ENCODE measurements at regions of chr12 and their contacts with region 1.

Region 1: DNA sequence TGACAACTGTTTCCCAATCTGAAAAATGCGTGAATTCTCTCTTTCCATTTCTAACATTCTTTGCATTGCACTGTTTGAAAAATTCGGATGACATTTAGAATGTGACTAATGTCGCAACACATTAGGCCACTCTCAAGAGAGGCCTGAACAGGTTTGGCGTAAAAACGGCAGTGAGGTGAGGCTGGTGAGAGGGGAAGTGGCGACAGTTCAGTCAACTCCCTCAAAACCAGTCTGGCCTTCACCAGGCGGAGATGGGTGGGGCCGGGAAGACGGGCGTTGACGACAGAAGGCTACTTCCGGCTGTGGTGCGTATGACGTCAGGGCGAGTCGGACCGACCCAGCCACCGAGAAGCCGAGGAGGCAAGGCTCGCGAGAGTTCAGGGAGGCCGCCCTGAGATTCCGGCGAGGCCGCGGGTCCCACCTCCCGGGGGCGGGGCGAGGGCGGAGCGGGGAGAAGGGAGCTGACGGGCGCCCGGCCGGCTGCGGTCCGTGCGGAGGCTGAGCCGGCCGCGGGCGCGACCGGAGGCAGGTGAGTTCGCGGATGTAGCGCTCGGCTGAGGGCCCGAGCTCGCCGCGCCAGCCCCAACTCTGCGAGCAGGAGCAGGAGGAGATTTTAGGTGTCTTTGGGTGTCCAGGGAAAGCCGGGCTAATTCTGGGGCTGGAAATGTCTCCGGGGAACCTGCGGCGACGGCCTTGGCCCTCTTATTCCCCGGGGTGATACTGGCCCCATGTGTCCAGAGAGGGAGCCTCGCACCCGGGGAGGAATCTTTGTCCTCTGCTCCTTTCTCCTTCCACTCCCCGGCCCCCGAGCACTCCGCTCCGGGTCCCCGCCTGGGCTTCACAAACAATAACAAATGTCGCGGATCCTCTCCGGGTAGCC is at the start of gene STK38L:
- DNase-seq: peak; percentile 99
- ATAC-seq: peak; percentile 99 to 100
- H3K4me3 ChIP-seq: peak within 1 kb of the TSS; percentile 81
- H3K27ac ChIP-seq: peak within 1 kb of the TSS; percentile 69
- H3K4me1 ChIP-seq: no peaks in the 10 kb centered on the region
- H3K27me3 ChIP-seq: no peaks in the 10 kb centered on the region
- total RNA-seq, gene STK38L: 59.1 to 160 (median 63.7) TPM

Region 2: DNA sequence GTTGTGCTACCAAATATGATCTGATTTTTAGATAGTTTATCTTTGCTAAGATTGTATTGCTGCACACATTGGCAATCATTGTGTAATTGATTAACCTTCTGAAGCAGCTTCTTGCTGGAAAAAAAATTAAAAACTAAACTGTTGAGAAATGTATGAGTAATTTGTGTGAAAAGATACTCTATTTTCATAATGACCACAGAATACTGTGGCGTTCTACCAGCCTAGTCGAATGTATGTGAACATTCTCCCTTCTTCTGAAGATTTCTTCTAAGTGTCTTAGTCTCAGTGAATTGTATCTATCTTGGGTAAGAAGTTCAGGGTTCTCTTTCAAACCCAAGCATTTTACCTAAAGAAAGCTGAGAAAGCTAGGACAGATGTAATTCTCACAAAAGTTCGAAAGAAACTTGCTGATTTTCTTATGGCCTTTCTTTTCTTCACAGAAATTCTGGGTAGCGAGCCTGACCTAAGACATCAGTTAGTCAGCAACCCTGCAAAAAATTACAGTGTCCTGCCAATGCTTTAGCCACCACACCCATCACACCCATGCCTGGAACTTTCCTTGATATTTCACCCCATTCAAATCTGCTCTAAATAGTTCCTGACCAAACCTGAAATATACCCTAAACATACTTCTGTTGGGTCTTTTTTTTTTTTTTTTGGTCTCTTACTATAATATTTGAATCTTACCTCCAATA is 134.6 kb before region 1 on chr12:
- intact Hi-C with region 1: no loop called
- DNase-seq: peak in 1 of 3 donors; percentile 16
- ATAC-seq: peak; percentile 68 to 90
- H3K4me3 ChIP-seq: no peak overlapping the region
- H3K27ac ChIP-seq: no peak overlapping the region
- H3K4me1 ChIP-seq: no peaks in the 10 kb centered on the region
- H3K27me3 ChIP-seq: no peaks in the 10 kb centered on the region

Region 3: DNA sequence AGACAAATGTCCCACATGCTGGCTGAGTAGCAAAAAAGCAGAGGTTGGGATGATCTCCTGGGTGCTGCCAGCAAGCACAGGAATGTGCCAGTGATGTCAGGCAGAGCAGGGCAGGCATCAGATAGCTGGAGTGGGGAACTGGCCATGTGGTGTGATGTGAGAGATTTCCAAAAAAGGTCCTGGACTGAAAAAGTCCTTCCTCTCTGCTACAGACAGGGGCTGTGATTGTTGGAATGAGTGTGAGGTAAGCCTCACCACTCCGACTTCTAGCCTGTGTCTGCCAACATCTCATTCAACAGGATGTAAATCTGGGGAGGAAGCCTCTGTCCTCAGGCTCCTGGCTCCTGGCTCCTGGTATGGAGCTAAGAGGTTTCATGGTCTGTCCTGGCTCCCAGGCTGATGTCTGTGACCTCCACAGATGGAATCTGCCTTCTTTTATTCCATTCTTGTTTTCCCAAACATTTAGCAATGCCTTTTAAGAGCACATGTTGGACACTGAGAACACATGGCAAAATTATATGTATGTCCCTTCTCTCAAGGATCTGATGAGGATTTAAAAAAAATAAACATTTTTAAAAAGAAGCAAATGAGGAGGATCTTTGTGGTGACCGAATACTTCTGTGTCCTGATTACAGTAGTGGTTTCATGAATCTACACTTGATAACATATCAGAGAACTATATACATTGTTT is 50.0 kb before region 1 on chr12:
- intact Hi-C with region 1: loop called in 2 of 4 experiments (anchors 10 kb)
- DNase-seq: peak; percentile 63 to 79 (median 74)
- ATAC-seq: peak; percentile 90 to 92
- H3K4me3 ChIP-seq: no peak overlapping the region
- H3K27ac ChIP-seq: peak overlapping the region; percentile 92
- H3K4me1 ChIP-seq: peaks cover 8% of the 10 kb centered on the region
- H3K27me3 ChIP-seq: no peaks in the 10 kb centered on the region

Region 4: GRCh38 chr12:27293463-27293862 is 49.4 kb after region 1 on chr12:
- intact Hi-C with region 1: loop called in 2 of 4 experiments (anchors 5 to 10 kb)
- DNase-seq: peak in 1 of 3 donors; percentile 49
- ATAC-seq: no peak
- H3K4me3 ChIP-seq: no peak overlapping the region
- H3K27ac ChIP-seq: no peak overlapping the region
- H3K4me1 ChIP-seq: peaks cover 10% of the 10 kb centered on the region
- H3K27me3 ChIP-seq: no peaks in the 10 kb centered on the region

Region 5: DNA sequence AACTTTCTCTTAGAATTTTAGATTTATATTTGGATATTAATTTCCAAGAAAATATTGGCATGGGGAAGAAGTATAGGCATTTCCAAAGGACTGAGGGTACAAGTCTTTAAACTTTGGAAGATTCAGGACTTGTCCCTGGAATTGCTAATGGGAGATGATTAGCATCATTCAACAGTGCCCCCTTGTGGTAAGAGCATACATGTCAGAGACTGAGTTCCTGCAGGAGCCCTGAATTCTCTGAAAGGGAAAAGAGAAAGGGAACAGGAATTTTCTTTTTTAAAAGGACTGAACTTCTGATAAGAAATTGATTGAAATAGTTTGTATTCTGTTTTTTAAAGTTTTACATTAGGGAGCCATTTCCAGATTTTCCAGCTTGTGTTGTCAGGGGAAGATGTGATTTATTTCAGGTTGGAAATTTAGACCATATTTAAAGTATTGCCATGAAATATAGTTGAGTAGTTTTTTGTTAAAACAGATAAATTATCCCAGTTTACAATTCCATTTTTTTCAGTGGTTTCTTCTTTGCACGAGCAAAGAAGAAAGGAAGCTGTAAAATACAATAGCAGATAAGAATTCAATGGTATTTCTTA is 408.2 kb after region 1 on chr12:
- intact Hi-C with region 1: no loop called
- DNase-seq: no peak
- ATAC-seq: peak; percentile 71 to 86
- H3K4me3 ChIP-seq: no peak overlapping the region
- H3K27ac ChIP-seq: no peak overlapping the region
- H3K4me1 ChIP-seq: no peaks in the 10 kb centered on the region
- H3K27me3 ChIP-seq: no peaks in the 10 kb centered on the region